Activated CD4-positive, alpha-beta T cell treated with anti-CD3 and anti-CD28 coated beads for 36 hours (primary cell): ENCODE measurements at regions of chr5 and their contacts with region 1.

Region 1: DNA sequence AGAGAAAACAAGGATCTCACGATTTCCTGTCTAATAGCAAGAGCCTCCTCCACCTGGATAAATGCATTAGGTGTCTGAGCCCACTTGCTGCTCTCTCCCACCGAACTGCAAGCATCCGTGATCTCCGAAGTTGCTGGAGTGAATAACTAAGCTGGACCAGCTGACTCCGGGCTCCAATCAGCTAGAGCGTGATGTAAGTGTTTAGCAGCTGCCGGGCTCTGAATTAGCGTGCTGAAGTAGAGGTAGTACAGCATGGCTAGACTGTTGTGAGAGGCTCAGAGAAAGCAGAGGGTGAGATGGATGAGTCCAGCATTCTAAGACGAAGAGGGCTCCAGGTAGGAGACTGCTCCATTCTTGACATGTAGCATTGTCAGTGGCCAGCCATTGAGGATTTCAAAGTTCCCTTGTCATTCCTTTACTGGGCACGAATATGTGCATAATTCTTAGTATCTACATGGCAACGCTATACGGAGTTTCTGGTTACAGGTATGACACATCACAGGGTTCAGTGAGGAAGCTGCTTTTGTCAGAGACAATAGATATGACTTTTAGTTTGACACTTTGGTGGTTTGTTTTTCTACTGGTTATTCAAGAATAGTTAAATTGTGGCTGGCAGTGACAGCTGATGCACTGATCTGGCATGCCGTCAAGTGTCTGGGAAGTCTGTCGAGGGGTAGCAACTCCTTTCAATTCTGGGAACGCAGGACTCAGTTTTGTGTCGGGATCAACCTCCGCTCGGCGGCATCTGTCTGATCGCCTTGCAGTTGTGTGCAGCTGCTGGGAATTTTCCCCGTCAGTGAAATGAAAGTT is 232.6 kb downstream of the MAST4 start:
- DNase-seq: peak; percentile 82
- ATAC-seq: peak; percentile 93
- H3K4me3 Mint-ChIP-seq: peak overlapping the region; percentile 82
- H3K27ac Mint-ChIP-seq: peak overlapping the region; percentile 83
- H3K4me1 Mint-ChIP-seq: peaks cover 25% of the 10 kb centered on the region
- H3K27me3 Mint-ChIP-seq: peaks cover 27% of the 10 kb centered on the region

Region 2: DNA sequence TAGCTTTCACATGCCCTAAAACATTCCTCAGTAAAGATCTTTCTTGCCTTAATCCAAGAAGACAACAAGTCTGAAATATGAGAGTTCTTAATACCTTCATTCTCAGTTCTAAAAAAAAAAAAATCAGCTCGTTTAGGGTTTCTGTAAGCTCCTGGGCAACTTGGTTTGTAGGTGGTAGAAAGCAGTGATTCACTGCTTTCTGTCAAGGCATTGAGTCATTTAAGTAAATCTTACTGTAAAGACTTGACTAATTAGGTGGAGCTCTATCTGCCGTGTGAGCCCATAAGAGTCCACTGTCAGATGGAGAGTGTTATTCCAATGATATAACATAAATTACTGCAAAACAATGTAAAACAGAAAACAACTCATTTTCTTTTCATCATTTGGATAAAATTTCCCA is 288.7 kb before region 1 on chr5:
- CTCF ChIA-PET with region 1: no interaction called
- POLR2A ChIA-PET with region 1: no interaction called
- intact Hi-C with region 1: loop called in 1 of 2 experiments (anchors 5 kb)
- DNase-seq: peak; percentile 29
- ATAC-seq: peak; percentile 100
- H3K4me3 Mint-ChIP-seq: no peak overlapping the region
- H3K27ac Mint-ChIP-seq: no peak overlapping the region
- H3K4me1 Mint-ChIP-seq: peaks cover 15% of the 10 kb centered on the region
- H3K27me3 Mint-ChIP-seq: peaks cover 18% of the 10 kb centered on the region

Region 3: DNA sequence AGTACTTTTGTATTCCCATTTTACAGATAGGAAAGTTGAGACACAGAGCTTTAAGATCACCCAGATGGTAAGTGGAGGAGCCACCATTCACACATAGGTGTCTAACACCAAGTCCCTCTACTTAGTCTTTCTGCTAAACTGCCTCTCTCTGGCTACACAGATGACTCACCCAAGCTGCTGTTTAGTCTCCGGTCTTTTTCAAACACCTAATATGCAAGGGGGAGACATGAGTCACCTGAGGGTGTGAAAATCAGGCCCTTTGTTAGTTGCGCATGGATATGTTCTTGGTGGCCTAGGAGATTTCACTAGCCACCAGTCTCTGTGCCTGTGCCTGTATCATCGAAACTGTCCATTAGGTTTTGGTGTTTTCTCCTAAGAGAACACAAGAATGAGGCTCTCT is 114.8 kb before region 1 on chr5:
- CTCF ChIA-PET with region 1: no interaction called
- POLR2A ChIA-PET with region 1: no interaction called
- intact Hi-C with region 1: no loop called
- DNase-seq: peak; percentile 7
- ATAC-seq: peak; percentile 30
- H3K4me3 Mint-ChIP-seq: no peak overlapping the region
- H3K27ac Mint-ChIP-seq: no peak overlapping the region
- H3K4me1 Mint-ChIP-seq: no peaks in the 10 kb centered on the region
- H3K27me3 Mint-ChIP-seq: peaks cover 9% of the 10 kb centered on the region

Region 4: DNA sequence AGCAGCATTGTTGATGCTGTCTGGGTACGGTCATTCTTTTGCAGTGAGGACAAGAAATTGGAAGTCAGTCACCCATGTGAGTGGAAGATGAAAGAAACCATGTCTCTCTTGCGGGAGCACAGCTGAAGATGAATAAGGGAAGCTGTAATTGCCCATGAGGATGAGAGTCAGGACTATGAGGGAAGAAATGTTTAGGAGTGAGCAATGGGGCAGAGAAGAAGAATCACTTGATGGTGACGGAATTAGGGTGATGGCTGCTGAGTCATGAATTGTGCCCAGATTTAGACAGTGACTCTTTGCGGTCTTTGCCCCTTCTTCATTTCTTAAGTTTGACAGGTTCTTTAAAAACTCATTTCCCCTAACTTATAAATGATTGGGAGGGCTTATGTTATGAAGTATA is 49.2 kb before region 1 on chr5:
- CTCF ChIA-PET with region 1: no interaction called
- POLR2A ChIA-PET with region 1: no interaction called
- intact Hi-C with region 1: no loop called
- DNase-seq: no peak
- ATAC-seq: no peak
- H3K4me3 Mint-ChIP-seq: no peak overlapping the region
- H3K27ac Mint-ChIP-seq: no peak overlapping the region
- H3K4me1 Mint-ChIP-seq: no peaks in the 10 kb centered on the region
- H3K27me3 Mint-ChIP-seq: peaks cover 4% of the 10 kb centered on the region

Region 5: DNA sequence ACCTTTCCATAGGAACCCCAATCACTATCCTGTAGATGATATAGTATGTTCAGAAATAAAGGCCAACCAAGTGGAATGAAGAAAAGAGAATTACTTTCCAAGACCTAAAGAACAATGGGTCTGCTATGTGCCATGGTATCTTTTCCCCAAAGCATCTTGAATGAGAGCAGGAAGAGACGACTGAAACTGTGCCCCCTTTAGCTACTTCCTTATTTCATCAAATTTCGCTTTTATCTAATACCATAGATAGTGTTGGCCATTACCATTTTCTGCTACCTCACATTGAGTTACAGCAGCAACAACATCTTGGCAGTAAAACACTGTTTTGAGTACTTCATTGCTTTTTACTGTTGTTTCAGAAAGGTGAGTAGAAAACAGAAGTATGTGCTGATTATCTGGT is 101.2 kb after region 1 on chr5:
- CTCF ChIA-PET with region 1: no interaction called
- POLR2A ChIA-PET with region 1: no interaction called
- intact Hi-C with region 1: no loop called
- DNase-seq: no peak
- ATAC-seq: no peak
- H3K4me3 Mint-ChIP-seq: no peak overlapping the region
- H3K27ac Mint-ChIP-seq: no peak overlapping the region
- H3K4me1 Mint-ChIP-seq: no peaks in the 10 kb centered on the region
- H3K27me3 Mint-ChIP-seq: peaks cover 12% of the 10 kb centered on the region